Heart right ventricle (tissue), 16 donors: ENCODE measurements at regions of chr2 and their contacts with region 1.

Region 1: GRCh38 chr2:221573430-221574230 is 1.5 kb upstream of the EPHA4 start:
- DNase-seq: peak; percentile 84 to 90
- ATAC-seq: peak; percentile 80 to 87 (median 82)
- H3K4me3 ChIP-seq: peak overlapping the region; percentile 59 to 92 (median 78)
- H3K27ac ChIP-seq: peak overlapping the region; percentile 55 to 95 (median 90)
- H3K4me1 ChIP-seq: peaks cover 0 to 41% (median 20%) of the 10 kb centered on the region in 9 donors
- H3K27me3 ChIP-seq: peaks cover 0 to 97% (median 14%) of the 10 kb centered on the region in 7 donors
- CTCF ChIP-seq: peak; percentile 95 to 99 (median 97)

Region 2: DNA sequence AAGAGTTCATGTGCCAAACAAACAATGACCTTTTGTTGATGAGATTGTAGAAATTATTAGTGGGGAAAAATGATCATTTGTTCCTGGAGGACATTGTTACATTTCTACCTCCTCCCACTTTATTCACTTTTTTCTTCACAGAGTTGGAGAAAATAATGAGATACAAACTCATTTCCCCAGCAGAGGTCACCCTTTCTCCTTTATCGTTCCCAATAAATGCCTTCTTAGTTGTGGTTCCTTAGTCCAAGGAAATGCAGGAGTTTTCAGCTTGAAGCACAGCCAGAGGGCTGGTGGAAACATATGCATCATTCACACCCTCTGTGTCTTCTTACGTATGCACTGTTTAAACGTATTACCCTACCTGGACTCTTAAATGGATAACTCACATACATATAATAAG is 1837.4 kb before region 1 on chr2:
- intact Hi-C with region 1: loop called in 8 of 10 experiments (anchors 2 to 10 kb)
- DNase-seq: peak in 1 of 2 donors; percentile 30
- ATAC-seq: peak in 7 of 8 donors; percentile 50 to 77 (median 65)
- H3K4me3 ChIP-seq: no peak overlapping the region
- H3K27ac ChIP-seq: no peak overlapping the region
- H3K4me1 ChIP-seq: peaks cover 0 to 23% (median 3%) of the 10 kb centered on the region in 9 donors
- H3K27me3 ChIP-seq: no peaks in the 10 kb centered on the region
- CTCF ChIP-seq: peak in 8 of 9 donors; percentile 18 to 70 (median 58)

Region 3: GRCh38 chr2:220687231-220687843 is 886.3 kb before region 1 on chr2:
- intact Hi-C with region 1: loop called (anchors 1 to 5 kb)
- DNase-seq: peak; percentile 50 to 74
- ATAC-seq: peak; percentile 78 to 91 (median 87)
- H3K4me3 ChIP-seq: no peak overlapping the region
- H3K27ac ChIP-seq: no peak overlapping the region
- H3K4me1 ChIP-seq: peaks cover 0 to 6% (median 0%) of the 10 kb centered on the region in 9 donors
- H3K27me3 ChIP-seq: no peaks in the 10 kb centered on the region
- CTCF ChIP-seq: peak; percentile 79 to 93 (median 90)

Region 4: GRCh38 chr2:221104361-221104811 is 469.2 kb before region 1 on chr2:
- intact Hi-C with region 1: loop called in 9 of 10 experiments (anchors 1 to 10 kb)
- DNase-seq: peak; percentile 84 to 85
- ATAC-seq: peak; percentile 93 to 99 (median 98)
- H3K4me3 ChIP-seq: peak overlapping the region in 7 of 10 donors; percentile 8 to 36 (median 13)
- H3K27ac ChIP-seq: peak overlapping the region in 9 of 10 donors; percentile 30 to 80 (median 71)
- H3K4me1 ChIP-seq: peaks cover 10 to 31% (median 21%) of the 10 kb centered on the region in 9 donors
- H3K27me3 ChIP-seq: peaks cover 0 to 2% (median 0%) of the 10 kb centered on the region in 7 donors
- CTCF ChIP-seq: peak in 7 of 9 donors; percentile 11 to 49 (median 34)

Region 5: GRCh38 chr2:221228214-221228769 is 345.3 kb before region 1 on chr2:
- intact Hi-C with region 1: loop called in 1 of 10 experiments (anchors 5 kb)
- DNase-seq: peak in 1 of 2 donors; percentile 13
- ATAC-seq: peak in 6 of 8 donors; percentile 38 to 90 (median 59)
- H3K4me3 ChIP-seq: no peak overlapping the region
- H3K27ac ChIP-seq: peak overlapping the region; percentile 10 to 78 (median 54)
- H3K4me1 ChIP-seq: peaks cover 0 to 27% (median 15%) of the 10 kb centered on the region in 9 donors
- H3K27me3 ChIP-seq: no peaks in the 10 kb centered on the region
- CTCF ChIP-seq: no peak

Region 6: GRCh38 chr2:221444106-221444505 is 129.5 kb before region 1 on chr2:
- intact Hi-C with region 1: loop called in 6 of 10 experiments (anchors 5 to 10 kb)
- DNase-seq: peak; percentile 24 to 48
- ATAC-seq: peak; percentile 69 to 96 (median 92)
- H3K4me3 ChIP-seq: no peak overlapping the region
- H3K27ac ChIP-seq: peak overlapping the region in 8 of 10 donors; percentile 10 to 77 (median 49)
- H3K4me1 ChIP-seq: peaks cover 3 to 35% (median 22%) of the 10 kb centered on the region in 9 donors
- H3K27me3 ChIP-seq: no peaks in the 10 kb centered on the region
- CTCF ChIP-seq: no peak

Region 7: GRCh38 chr2:221529943-221530652 is 43.5 kb before region 1 on chr2:
- intact Hi-C with region 1: loop called in 1 of 10 experiments (anchors 5 kb)
- DNase-seq: no peak
- ATAC-seq: peak in 3 of 8 donors; percentile 23 to 38 (median 26)
- H3K4me3 ChIP-seq: peak overlapping the region in 3 of 10 donors; percentile 16 to 25 (median 23)
- H3K27ac ChIP-seq: peak overlapping the region; percentile 20 to 86 (median 68)
- H3K4me1 ChIP-seq: peaks cover 5 to 88% (median 49%) of the 10 kb centered on the region in 9 donors
- H3K27me3 ChIP-seq: no peaks in the 10 kb centered on the region
- CTCF ChIP-seq: no peak